ENCODE measurements at regions of chr15 and their contacts with region 1.

Region 1: GRCh38 chr15:75578948-75579920 is at the start of gene PTPN9:
- DNase-seq: peak; percentile 78
- ATAC-seq: peak; percentile 83
- H3K4me3 Mint-ChIP-seq: peak within 1 kb of the TSS; percentile 94
- H3K27ac Mint-ChIP-seq: peak within 1 kb of the TSS; percentile 90
- H3K4me1 Mint-ChIP-seq: peaks cover 18% of the 10 kb centered on the region
- H3K27me3 Mint-ChIP-seq: no peaks in the 10 kb centered on the region
- total RNA-seq, gene PTPN9: 35.8 to 37.5 TPM

Region 2: GRCh38 chr15:75367913-75368688 is 211.1 kb before region 1 on chr15 and contains the start of gene MAN2C1:
- POLR2A ChIA-PET with region 1: interaction called, 14 read pairs
- DNase-seq: peak; percentile 94
- ATAC-seq: peak; percentile 91
- H3K4me3 Mint-ChIP-seq: peak within 1 kb of the TSS; percentile 89
- H3K27ac Mint-ChIP-seq: peak within 1 kb of the TSS; percentile 91
- H3K4me1 Mint-ChIP-seq: peaks cover 22% of the 10 kb centered on the region
- H3K27me3 Mint-ChIP-seq: no peaks in the 10 kb centered on the region
- total RNA-seq, gene MAN2C1: 232 to 235 TPM

Region 3: DNA sequence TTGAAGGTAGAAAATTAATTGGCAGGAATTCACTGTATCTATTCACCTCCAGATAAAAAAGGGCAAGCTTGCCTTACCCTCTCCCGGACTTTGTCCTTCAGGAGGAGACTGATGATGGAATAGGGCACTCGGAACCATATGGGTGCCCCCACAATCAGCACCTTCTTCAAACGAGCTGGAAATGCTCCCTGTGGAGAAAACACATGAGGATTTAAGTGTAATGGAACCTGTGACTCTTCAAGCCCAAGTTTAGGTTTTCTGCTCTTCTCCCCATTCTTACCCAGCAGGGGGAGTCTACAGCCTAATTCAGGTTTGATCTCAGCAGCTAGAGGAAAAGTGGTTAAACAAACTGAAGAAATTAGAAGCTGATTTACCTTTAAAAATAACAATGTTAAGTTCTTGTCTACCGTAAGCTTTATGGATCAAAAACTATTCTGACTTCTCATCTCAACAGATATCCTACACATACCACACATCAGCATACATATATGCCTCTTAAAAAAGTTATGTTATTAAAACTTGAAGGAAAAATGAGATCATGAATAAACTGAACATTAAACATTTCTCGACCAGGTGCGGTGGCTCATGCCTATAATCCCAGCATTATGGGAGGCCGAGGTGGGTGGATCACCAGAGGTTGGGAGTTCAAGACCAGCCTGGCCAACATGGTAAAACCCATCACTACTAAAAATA is 70.2 kb before region 1 on chr15:
- POLR2A ChIA-PET with region 1: no interaction called
- DNase-seq: no peak
- ATAC-seq: no peak
- H3K4me3 Mint-ChIP-seq: no peak overlapping the region
- H3K27ac Mint-ChIP-seq: no peak overlapping the region
- H3K4me1 Mint-ChIP-seq: peaks cover 4% of the 10 kb centered on the region
- H3K27me3 Mint-ChIP-seq: no peaks in the 10 kb centered on the region

Region 4: DNA sequence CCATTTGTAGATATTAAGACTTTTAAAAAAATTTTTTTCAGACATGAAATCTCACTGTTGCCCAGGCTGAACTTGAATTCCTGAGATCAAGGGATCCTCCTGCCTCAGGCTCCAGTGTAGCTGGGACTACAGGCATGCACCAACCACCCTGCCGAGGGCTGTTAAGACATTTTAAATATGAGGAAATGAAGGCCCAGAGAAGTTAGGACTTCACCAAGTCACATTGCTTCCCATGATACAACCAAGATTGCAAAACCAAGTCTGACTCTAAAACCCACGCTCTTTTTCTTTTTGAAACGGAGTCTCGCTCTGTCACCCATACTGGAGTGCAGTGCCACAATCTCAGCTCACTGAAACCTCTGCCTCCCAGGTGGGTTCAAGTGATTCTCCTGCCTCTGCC is 28.2 kb before region 1 on chr15:
- POLR2A ChIA-PET with region 1: no interaction called
- DNase-seq: no peak
- ATAC-seq: no peak
- H3K4me3 Mint-ChIP-seq: no peak overlapping the region
- H3K27ac Mint-ChIP-seq: no peak overlapping the region
- H3K4me1 Mint-ChIP-seq: peaks cover 3% of the 10 kb centered on the region
- H3K27me3 Mint-ChIP-seq: no peaks in the 10 kb centered on the region

Region 5: DNA sequence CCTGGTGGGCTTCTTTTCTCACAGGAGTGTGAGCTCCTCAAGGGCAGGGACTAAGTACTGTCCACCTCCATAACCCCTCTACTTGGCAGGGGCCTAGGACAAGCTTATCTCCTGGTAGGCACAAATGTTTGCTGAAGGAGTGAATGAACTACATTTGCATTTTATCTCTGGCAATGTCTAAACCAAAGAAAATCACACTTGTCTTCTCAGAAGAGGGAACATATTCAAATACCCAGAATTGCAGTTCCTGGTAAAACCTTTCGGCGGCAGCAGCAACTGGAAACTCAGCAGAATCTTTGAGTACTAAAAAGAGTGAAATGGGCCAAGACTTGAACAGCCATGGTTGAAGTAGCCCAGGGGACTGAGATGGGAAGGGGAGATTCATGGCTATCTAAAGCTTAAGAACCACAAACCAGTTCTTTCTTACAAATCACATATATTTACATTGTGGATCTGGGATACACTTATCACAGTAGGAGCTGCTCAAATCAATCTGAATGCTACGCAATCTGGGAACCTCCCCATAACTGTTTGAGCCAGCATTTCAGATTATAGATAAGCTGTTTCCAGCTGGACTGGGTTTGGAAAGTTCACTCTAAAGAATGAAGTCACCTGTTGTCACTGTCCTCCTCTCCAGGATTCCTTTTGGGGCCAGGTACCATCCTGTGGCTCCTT is 18.6 kb after region 1 on chr15:
- POLR2A ChIA-PET with region 1: interaction called, 24 read pairs
- DNase-seq: peak; percentile 47
- ATAC-seq: peak; percentile 89
- H3K4me3 Mint-ChIP-seq: peak overlapping the region; percentile 76
- H3K27ac Mint-ChIP-seq: peak overlapping the region; percentile 92
- H3K4me1 Mint-ChIP-seq: peaks cover 34% of the 10 kb centered on the region
- H3K27me3 Mint-ChIP-seq: no peaks in the 10 kb centered on the region

Region 6: DNA sequence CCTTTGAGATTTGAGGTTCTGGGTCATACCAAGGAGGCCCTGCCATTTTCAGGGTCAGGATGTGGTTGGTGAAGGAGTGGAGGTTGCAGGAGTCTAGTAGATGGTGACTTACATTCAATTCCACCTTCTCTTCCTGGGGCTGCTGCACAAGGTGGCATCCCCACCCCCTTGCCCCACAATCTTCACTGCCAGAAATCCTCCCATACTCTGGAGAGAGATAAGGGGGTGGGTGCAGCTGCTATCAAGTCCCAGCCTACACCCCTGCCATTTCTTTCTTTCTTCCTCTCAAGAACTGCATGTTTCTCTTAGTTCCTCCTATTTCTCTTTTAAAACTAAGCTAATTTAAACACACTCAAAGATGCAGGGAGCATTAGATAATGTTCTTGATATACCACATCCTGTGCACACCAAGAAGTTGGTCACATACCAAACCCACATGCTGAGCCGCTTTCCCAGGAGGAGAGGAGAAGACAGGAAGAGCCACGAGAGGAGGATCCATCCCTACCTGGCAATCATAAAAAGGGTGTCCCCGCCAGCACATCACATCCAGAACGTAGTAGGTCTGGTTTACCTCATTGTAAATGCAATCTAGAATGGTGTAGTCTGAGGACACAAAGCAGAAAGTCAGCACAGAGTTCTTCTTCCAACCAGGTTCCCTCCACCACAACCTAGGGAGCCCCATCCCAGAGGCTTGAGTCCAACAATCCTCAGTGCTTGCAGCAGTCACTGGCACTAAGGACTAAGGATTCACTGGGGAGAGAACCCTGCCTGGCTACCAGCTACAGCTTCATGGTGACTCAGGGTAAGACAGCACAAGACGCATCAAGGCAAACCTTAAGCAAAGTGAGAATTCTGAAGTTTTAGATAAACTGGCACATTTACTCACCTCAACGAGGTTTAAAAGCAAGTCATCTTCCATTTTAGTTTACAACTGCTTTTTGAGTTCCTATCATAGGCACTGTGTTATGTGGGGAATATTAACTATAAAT is 27.8 kb after region 1 on chr15:
- POLR2A ChIA-PET with region 1: interaction called, 36 read pairs
- DNase-seq: peak; percentile 54
- ATAC-seq: peak; percentile 90
- H3K4me3 Mint-ChIP-seq: peak overlapping the region; percentile 84
- H3K27ac Mint-ChIP-seq: peak overlapping the region; percentile 98
- H3K4me1 Mint-ChIP-seq: peaks cover 42% of the 10 kb centered on the region
- H3K27me3 Mint-ChIP-seq: no peaks in the 10 kb centered on the region

Region 7: GRCh38 chr15:76108021-76108723 is 528.9 kb after region 1 on chr15:
- POLR2A ChIA-PET with region 1: no interaction called
- DNase-seq: no peak
- ATAC-seq: no peak
- H3K4me3 Mint-ChIP-seq: no peak overlapping the region
- H3K27ac Mint-ChIP-seq: no peak overlapping the region
- H3K4me1 Mint-ChIP-seq: no peaks in the 10 kb centered on the region
- H3K27me3 Mint-ChIP-seq: peaks cover 25% of the 10 kb centered on the region